Posterior vena cava (tissue), 2 donors: ENCODE measurements at regions of chr11 and their contacts with region 1.

Region 1: GRCh38 chr11:2885676-2886081 is at the start of gene CDKN1C:
- DNase-seq: peak; percentile 95
- total RNA-seq, gene CDKN1C: 23.6 to 58.8 TPM

Region 2: GRCh38 chr11:2699531-2700414 is 185.9 kb before region 1 on chr11 and contains the start of gene KCNQ1OT1:
- intact Hi-C with region 1: loop called in 1 of 2 experiments (anchors 10 kb)
- DNase-seq: peak; percentile 96
- total RNA-seq, gene KCNQ1OT1: 1.8 to 3.5 TPM

Region 3: GRCh38 chr11:2837096-2837601 is 48.5 kb before region 1 on chr11:
- intact Hi-C with region 1: loop called in 1 of 2 experiments (anchors 5 kb)
- DNase-seq: peak; percentile 94

Region 4: GRCh38 chr11:2850371-2850770 is 35.3 kb before region 1 on chr11:
- intact Hi-C with region 1: no loop called
- DNase-seq: no peak